Activated naive CD4-positive, alpha-beta T cell treated with anti-CD3 and anti-CD28 coated beads for 36 hours (primary cell): ENCODE measurements at regions of chrX and their contacts with region 1.

Region 1: DNA sequence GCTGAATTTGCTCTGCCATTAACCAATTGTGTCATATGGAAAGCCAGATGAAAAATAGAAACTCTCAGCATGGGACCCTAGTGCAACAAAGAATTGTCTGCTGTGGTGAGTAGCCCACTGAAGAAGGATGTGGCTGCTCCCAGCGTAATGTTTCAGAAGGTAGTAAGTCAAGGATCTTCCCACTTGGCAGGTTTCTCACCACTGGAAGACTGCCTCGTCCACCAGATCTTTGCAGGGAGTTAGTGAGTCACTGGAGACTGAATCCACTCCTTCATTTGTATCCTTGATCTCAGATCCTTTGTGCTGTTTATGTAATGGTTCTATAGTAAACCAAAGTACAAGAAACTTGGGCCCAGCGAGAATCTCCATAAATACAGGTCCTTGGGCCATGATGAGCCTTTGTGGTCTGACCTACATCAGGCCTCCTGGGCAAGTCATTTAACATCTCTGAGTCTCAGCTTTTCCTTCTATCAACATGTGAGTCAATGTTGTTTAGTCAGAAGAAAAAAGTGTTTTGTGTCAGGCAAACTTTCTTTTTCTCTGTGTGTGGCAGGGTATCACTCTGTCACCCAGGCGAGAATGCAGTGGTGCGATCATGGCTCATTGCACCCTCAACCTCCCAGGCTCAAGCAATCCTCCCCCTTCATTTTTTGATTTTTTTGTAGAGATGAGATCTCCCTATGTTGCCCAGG is 78.0 kb upstream of the CCDC160 start:
- DNase-seq: peak; percentile 64
- H3K4me3 Mint-ChIP-seq: no peak overlapping the region
- H3K27ac Mint-ChIP-seq: peak overlapping the region; percentile 36
- H3K4me1 Mint-ChIP-seq: peaks cover 19% of the 10 kb centered on the region
- H3K27me3 Mint-ChIP-seq: no peaks in the 10 kb centered on the region

Region 2: DNA sequence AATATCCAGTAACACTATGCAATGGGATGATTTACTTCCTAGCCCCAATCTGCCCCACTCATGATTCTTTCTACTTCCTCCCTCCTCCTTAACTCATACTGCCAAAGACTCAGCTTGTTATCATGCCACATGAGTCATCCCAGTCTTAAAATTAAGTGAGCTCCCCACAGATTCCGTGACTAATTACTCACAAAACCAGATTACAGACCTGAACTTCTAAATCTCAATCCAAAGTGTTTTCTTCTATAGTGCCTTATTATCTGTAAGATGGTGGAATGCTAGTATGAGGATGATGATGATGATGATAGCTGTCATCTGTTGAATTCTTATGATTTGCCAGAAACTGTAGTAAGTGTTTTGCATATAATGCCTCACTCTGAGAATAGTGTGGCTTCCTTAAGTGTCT is 145.9 kb before region 1 on chrX:
- CTCF ChIA-PET with region 1: no interaction called
- intact Hi-C with region 1: loop called (anchors 1 kb)
- DNase-seq: peak; percentile 6
- H3K4me3 Mint-ChIP-seq: no peak overlapping the region
- H3K27ac Mint-ChIP-seq: no peak overlapping the region
- H3K4me1 Mint-ChIP-seq: peaks cover 12% of the 10 kb centered on the region
- H3K27me3 Mint-ChIP-seq: no peaks in the 10 kb centered on the region

Region 3: DNA sequence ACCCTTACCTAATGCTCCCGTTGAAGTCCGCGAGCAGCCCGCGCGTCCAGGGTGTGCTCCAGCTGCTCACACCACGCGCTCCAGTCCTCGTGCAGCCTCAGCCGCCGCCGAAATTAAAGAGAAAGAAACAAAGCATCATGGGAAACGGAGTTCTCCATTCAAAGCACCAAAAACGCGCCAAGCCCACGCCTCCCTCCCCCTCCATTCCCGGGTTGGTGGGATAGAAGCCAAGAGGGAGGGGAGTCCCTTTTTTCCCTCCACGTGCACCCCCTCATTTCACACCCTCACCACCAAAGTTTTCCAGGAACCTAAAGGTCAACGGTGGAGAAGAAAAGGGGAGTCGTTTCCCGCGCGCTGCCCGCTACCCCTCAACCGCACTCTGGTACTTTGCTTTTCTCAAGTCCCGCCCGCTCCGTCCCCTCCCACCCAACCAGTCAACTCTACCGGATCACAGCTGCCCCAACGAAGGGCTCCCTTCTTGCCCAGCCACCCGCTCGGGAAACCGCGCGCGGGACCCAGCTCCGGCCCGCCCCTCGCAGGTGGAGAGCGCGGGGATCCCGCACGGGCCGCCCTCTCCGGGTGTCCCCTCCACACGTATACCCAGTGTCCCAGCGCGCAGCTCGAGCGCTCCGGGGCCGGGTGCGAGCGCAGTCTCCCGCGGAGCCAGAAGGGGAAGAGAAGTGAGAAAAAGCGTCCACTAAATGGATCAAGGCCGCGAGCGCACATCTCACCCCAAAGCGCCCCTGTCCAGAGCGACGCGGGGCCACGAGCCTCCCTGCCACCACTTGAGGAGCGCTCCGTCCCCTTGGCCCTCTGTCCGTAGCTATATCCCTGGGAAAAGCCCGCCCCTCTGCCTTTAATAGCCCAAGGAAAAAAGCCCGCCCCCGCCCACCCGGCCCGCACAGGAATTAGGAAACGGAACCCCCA is 13.0 kb after region 1 on chrX:
- CTCF ChIA-PET with region 1: interaction called, 3 read pairs
- intact Hi-C with region 1: loop called (anchors 1 kb)
- DNase-seq: peak; percentile 53
- H3K4me3 Mint-ChIP-seq: peak overlapping the region; percentile 77
- H3K27ac Mint-ChIP-seq: peak overlapping the region; percentile 87
- H3K4me1 Mint-ChIP-seq: peaks cover 19% of the 10 kb centered on the region
- H3K27me3 Mint-ChIP-seq: peaks cover 3% of the 10 kb centered on the region